ENCODE measurements at regions of chr1 and their contacts with region 1.

Region 1: GRCh38 chr1:9494929-9495758 is 44.1 kb upstream of the SLC25A33 start:
- DNase-seq: no peak
- H3K4me3 ChIP-seq: peak overlapping the region; percentile 43
- CTCF ChIP-seq: peak; percentile 91

Region 2: GRCh38 chr1:9110669-9111356 is 384.3 kb before region 1 on chr1:
- CTCF ChIA-PET with region 1: interaction called, 41 read pairs
- POLR2A ChIA-PET with region 1: no interaction called
- DNase-seq: peak; percentile 34
- H3K4me3 ChIP-seq: no peak overlapping the region
- CTCF ChIP-seq: peak; percentile 92

Region 3: GRCh38 chr1:9292361-9293240 is 202.5 kb before region 1 on chr1 and contains the start of gene SPSB1:
- CTCF ChIA-PET with region 1: interaction called, 222 read pairs
- POLR2A ChIA-PET with region 1: interaction called, 3 read pairs
- DNase-seq: no peak
- H3K4me3 ChIP-seq: peak within 1 kb of the TSS; percentile 83
- CTCF ChIP-seq: no peak

Region 4: GRCh38 chr1:9481048-9481447 is 14.1 kb before region 1 on chr1:
- CTCF ChIA-PET with region 1: interaction called, 50 read pairs
- POLR2A ChIA-PET with region 1: no interaction called
- DNase-seq: no peak
- H3K4me3 ChIP-seq: no peak overlapping the region
- CTCF ChIP-seq: no peak

Region 5: GRCh38 chr1:9529190-9529589 is 34.0 kb after region 1 on chr1:
- CTCF ChIA-PET with region 1: interaction called, 11 read pairs
- POLR2A ChIA-PET with region 1: no interaction called
- DNase-seq: no peak
- H3K4me3 ChIP-seq: no peak overlapping the region
- CTCF ChIP-seq: no peak

Region 6: DNA sequence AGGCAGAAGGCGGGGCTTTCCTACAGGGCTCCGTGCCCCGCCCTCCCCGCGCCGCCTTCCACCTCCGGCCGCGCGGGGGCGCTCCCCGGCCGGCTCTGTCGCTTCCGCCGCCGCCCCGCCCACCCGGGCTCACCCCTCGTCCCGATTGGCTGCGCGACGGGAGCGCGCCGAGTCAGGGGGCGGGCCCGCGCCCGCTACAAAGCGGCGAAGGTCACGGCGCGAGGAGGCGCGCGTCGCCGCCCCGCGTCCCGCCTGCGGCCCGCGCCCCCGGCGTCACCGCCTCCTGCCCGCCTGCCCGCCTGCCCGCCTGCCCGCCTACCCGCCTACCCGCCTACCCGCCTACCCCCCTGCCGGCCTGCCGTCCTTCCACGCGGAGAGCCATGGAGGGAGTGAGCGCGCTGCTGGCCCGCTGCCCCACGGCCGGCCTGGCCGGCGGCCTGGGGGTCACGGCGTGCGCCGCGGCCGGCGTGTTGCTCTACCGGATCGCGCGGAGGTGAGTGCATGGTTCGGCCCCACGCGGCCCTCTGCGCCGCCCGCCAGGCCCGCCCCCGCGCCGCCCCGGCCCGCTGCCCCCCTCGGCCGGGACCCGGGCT is 93.5 kb after region 1 on chr1 and contains the start of gene TMEM201:
- CTCF ChIA-PET with region 1: interaction called, 11 read pairs
- POLR2A ChIA-PET with region 1: no interaction called
- DNase-seq: peak; percentile 4
- H3K4me3 ChIP-seq: peak within 1 kb of the TSS; percentile 67
- CTCF ChIP-seq: peak; percentile 64

Region 7: GRCh38 chr1:9643351-9644256 is 148.5 kb after region 1 on chr1:
- CTCF ChIA-PET with region 1: no interaction called
- POLR2A ChIA-PET with region 1: no interaction called
- DNase-seq: no peak
- H3K4me3 ChIP-seq: no peak overlapping the region
- CTCF ChIP-seq: no peak

Measured in AG04449 (cell line).